ENCODE measurements at regions of chr9 and their contacts with region 1.

Region 1: DNA sequence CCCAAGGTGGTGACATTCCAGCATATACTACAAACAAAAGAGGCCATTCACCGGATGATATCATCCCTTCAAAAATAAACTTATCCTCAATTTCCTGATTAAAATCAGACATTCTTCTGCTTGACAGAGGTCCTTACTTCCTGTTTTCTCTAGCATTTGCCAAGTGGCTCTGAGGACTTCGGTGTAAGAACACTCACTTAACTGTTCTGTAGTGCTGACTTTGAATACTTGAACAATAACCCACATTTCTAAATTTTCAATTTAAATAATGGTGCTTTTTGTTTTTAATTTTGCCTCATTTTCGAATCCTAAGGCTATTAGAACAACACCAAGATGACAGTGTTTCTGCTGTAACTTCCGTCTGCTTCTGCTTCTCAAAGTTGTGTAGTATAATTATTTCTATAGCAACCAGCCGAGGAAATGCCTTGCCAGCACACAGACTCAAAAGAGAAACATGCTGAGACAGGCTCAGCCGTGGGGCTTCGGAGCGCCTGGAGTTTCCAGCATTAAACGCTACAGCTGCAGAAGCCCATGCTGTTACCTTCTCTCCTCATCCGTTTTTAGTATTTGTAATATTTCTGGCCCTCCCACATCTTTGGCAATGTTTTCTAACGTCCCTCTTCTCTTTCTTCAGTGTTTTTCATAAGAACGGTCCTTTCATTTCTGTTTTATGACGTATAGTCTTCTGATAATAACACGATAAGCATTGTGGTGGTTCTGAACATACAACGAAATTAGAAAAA is 19.5 kb upstream of the ANXA1 start:
- DNase-seq: peak; percentile 75
- ATAC-seq: peak; percentile 80
- H3K4me3 ChIP-seq: peak overlapping the region; percentile 50 to 97 (median 71)
- H3K4me3 Mint-ChIP-seq: peak overlapping the region; percentile 87
- H3K27ac ChIP-seq: peak overlapping the region; percentile 49 to 83
- H3K27ac Mint-ChIP-seq: peak overlapping the region; percentile 67
- H3K4me1 ChIP-seq: peaks cover 3 to 5% of the 10 kb centered on the region in 2 donors
- H3K4me1 Mint-ChIP-seq: peaks cover 13% of the 10 kb centered on the region
- H3K27me3 ChIP-seq: no peaks in the 10 kb centered on the region
- H3K27me3 Mint-ChIP-seq: peaks cover 2% of the 10 kb centered on the region
- CTCF ChIP-seq: no peak

Region 2: DNA sequence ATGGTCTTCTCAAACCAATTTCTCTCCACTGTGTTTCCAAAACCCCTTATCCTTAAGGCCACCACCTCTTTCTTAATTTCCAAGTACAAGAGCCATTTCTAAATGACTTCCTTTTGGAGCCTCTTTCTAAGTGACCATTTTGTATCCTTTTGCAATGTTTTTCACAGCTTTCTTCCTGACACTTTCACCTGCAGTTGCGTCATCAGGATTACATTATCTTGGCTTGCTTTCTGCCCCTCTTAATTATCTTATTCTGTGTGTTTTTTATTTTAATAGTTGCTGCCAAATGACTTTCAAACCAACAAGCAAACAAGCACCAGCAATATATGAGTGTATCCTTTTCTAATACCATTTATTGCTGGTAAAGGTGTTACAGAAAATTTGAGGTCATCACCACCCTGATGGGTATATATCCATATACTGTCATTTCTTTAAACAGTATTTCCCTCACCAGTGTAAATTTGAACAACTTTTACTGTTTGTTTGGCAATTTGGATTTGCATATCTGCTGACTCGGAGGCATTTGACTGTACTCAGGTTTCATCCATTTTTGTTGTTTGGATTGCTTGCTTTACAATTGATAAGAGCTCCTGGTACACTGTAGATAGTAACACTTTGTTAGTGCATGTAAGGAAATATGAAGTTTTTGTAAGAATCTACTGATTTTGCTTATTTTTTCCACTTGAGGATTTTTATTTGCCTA is 14.1 kb after region 1 on chr9:
- CTCF ChIA-PET with region 1: interaction called, 3 read pairs
- POLR2A ChIA-PET with region 1: interaction called, 4 read pairs
- intact Hi-C with region 1: loop called (anchors 2 kb)
- DNase-seq: no peak
- ATAC-seq: no peak
- H3K4me3 ChIP-seq: no peak overlapping the region
- H3K4me3 Mint-ChIP-seq: no peak overlapping the region
- H3K27ac ChIP-seq: no peak overlapping the region
- H3K27ac Mint-ChIP-seq: no peak overlapping the region
- H3K4me1 ChIP-seq: peaks cover 4 to 10% of the 10 kb centered on the region in 2 donors
- H3K4me1 Mint-ChIP-seq: peaks cover 15% of the 10 kb centered on the region
- H3K27me3 ChIP-seq: no peaks in the 10 kb centered on the region
- H3K27me3 Mint-ChIP-seq: no peaks in the 10 kb centered on the region
- CTCF ChIP-seq: no peak

Region 3: GRCh38 chr9:73294336-73294735 is 162.1 kb after region 1 on chr9:
- CTCF ChIA-PET with region 1: no interaction called
- POLR2A ChIA-PET with region 1: no interaction called
- intact Hi-C with region 1: no loop called
- DNase-seq: no peak
- ATAC-seq: no peak
- H3K4me3 ChIP-seq: no peak overlapping the region
- H3K4me3 Mint-ChIP-seq: no peak overlapping the region
- H3K27ac ChIP-seq: no peak overlapping the region
- H3K27ac Mint-ChIP-seq: no peak overlapping the region
- H3K4me1 ChIP-seq: no peaks in the 10 kb centered on the region
- H3K4me1 Mint-ChIP-seq: no peaks in the 10 kb centered on the region
- H3K27me3 ChIP-seq: no peaks in the 10 kb centered on the region
- H3K27me3 Mint-ChIP-seq: no peaks in the 10 kb centered on the region
- CTCF ChIP-seq: no peak